ENCODE measurements at regions of chr11 and their contacts with region 1.

Region 1: GRCh38 chr11:119196833-119197483 is 9.2 kb upstream of the CBL start:
- DNase-seq: no peak
- H3K4me3 ChIP-seq: no peak overlapping the region
- H3K27ac ChIP-seq: no peak overlapping the region
- H3K4me1 ChIP-seq: no peaks in the 10 kb centered on the region
- H3K27me3 ChIP-seq: no peaks in the 10 kb centered on the region
- CTCF ChIP-seq: peak; percentile 75 to 81 (median 79)
- EP300 ChIP-seq: no peak
- POLR2A ChIP-seq: no peak

Region 2: GRCh38 chr11:119144825-119145486 is 52.0 kb before region 1 on chr11:
- intact Hi-C with region 1: loop called (anchors 5 kb)
- DNase-seq: no peak
- H3K4me3 ChIP-seq: no peak overlapping the region
- H3K27ac ChIP-seq: no peak overlapping the region
- H3K4me1 ChIP-seq: peaks cover 12 to 27% (median 24%) of the 10 kb centered on the region in 4 donors
- H3K27me3 ChIP-seq: peaks cover 0 to 20% (median 0%) of the 10 kb centered on the region in 4 donors
- CTCF ChIP-seq: peak; percentile 54 to 84 (median 65)
- EP300 ChIP-seq: no peak
- POLR2A ChIP-seq: no peak

Region 3: GRCh38 chr11:119168471-119169281 is 28.3 kb before region 1 on chr11 and contains the start of gene NLRX1:
- intact Hi-C with region 1: loop called (anchors 2 kb)
- DNase-seq: peak; percentile 95
- H3K4me3 ChIP-seq: peak within 1 kb of the TSS; percentile 82 to 94 (median 88)
- H3K27ac ChIP-seq: peak within 1 kb of the TSS; percentile 96 to 99 (median 96)
- H3K4me1 ChIP-seq: peaks cover 10 to 17% (median 11%) of the 10 kb centered on the region in 4 donors
- H3K27me3 ChIP-seq: no peaks in the 10 kb centered on the region
- CTCF ChIP-seq: peak; percentile 78 to 97 (median 94)
- EP300 ChIP-seq: no peak
- POLR2A ChIP-seq: peak; percentile 59
- total RNA-seq, gene NLRX1: 21.5 to 47.3 (median 27.2) TPM

Region 4: GRCh38 chr11:119249671-119250010 is 52.7 kb after region 1 on chr11:
- intact Hi-C with region 1: no loop called
- DNase-seq: no peak
- H3K4me3 ChIP-seq: no peak overlapping the region
- H3K27ac ChIP-seq: peak overlapping the region in 3 of 4 donors; percentile 51 to 72 (median 52)
- H3K4me1 ChIP-seq: peaks cover 0 to 29% (median 17%) of the 10 kb centered on the region in 4 donors
- H3K27me3 ChIP-seq: no peaks in the 10 kb centered on the region
- CTCF ChIP-seq: no peak
- EP300 ChIP-seq: no peak
- POLR2A ChIP-seq: no peak